IMR-90 (cell line): ENCODE measurements at regions of chr6 and their contacts with region 1.

Region 1: DNA sequence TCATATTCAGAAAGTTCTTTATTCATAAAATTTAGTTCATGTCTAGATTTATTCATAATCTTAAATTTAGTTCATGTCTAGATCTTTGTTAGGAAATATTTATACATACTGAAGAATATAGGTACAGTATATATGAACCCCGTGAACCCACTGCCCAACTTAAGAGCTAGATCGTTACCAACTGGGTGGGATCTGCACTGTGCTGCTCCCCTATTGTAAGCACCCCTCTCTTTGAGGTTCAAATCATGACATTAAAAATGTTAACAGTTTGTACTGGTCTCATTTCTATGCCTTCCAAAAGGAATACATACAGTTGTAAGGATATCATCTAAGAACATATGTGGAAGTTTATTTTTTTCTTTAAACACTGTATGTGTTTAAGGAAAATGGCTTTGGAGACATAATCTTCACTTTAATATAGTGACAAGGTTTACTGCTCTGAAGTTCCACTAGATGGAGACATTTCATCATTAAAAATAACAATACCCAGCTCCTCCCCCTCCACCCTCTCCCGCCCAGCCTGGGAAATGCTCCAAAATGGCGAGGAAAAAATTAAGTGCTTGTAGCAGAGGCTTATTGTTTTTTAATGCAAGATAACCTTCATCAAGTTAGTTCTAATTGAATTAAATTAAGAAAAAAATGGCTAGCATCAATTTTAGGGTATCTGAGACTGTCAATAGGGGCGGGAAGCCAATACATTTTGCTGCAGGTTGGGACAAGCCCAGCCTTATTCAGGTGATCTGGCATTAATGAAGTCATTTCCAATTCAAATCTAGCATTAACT is 104.1 kb upstream of the TRAF3IP2 start:
- DNase-seq: peak; percentile 76
- ATAC-seq: peak; percentile 90
- H3K4me3 ChIP-seq: no peak overlapping the region
- H3K27ac ChIP-seq: 0 out of 2 replicates have a peak overlapping the region, but pooled peaks have one; percentile 48
- H3K4me1 ChIP-seq: peaks cover 6% of the 10 kb centered on the region
- H3K27me3 ChIP-seq: no peaks in the 10 kb centered on the region
- CTCF ChIP-seq: peak; percentile 82
- POLR2A ChIP-seq: no peak
- RAD21 ChIP-seq: peak; percentile 87

Region 2: GRCh38 chr6:111113336-111114086 is 596.3 kb before region 1 on chr6:
- CTCF ChIA-PET with region 1: no interaction called
- POLR2A ChIA-PET with region 1: no interaction called
- dilution Hi-C with region 1: no loop called
- in situ Hi-C with region 1: no loop called
- intact Hi-C with region 1: no loop called
- DNase-seq: peak; percentile 48
- ATAC-seq: no peak; the same call in 1 of the 2 replicates
- H3K4me3 ChIP-seq: no peak overlapping the region
- H3K27ac ChIP-seq: no peak overlapping the region
- H3K4me1 ChIP-seq: no peaks in the 10 kb centered on the region
- H3K27me3 ChIP-seq: no peaks in the 10 kb centered on the region
- CTCF ChIP-seq: no peak
- POLR2A ChIP-seq: no peak
- RAD21 ChIP-seq: no peak

Region 3: GRCh38 chr6:111823831-111824607 is 114.2 kb after region 1 on chr6:
- CTCF ChIA-PET with region 1: no interaction called
- POLR2A ChIA-PET with region 1: no interaction called
- dilution Hi-C with region 1: no loop called
- in situ Hi-C with region 1: no loop called
- intact Hi-C with region 1: loop called (anchors 5 kb)
- DNase-seq: peak; percentile 86
- ATAC-seq: peak; percentile 87
- H3K4me3 ChIP-seq: peak overlapping the region; percentile 11; the same call in 1 of the 2 replicates
- H3K27ac ChIP-seq: no peak overlapping the region
- H3K4me1 ChIP-seq: peaks cover 15% of the 10 kb centered on the region
- H3K27me3 ChIP-seq: no peaks in the 10 kb centered on the region
- CTCF ChIP-seq: no peak
- POLR2A ChIP-seq: 0 out of 2 replicates have a peak, but pooled peaks have one; percentile 42
- RAD21 ChIP-seq: no peak

Region 4: GRCh38 chr6:111997078-111997852 is 287.5 kb after region 1 on chr6:
- CTCF ChIA-PET with region 1: interaction called, 3 read pairs
- POLR2A ChIA-PET with region 1: no interaction called
- dilution Hi-C with region 1: no loop called
- in situ Hi-C with region 1: loop called (anchors 5 kb)
- intact Hi-C with region 1: loop called (anchors 1 kb)
- DNase-seq: peak; percentile 80
- ATAC-seq: peak; percentile 96
- H3K4me3 ChIP-seq: no peak overlapping the region
- H3K27ac ChIP-seq: no peak overlapping the region
- H3K4me1 ChIP-seq: no peaks in the 10 kb centered on the region
- H3K27me3 ChIP-seq: peaks cover 2% of the 10 kb centered on the region; the same call in 1 of the 2 replicates
- CTCF ChIP-seq: peak; percentile 95
- POLR2A ChIP-seq: 0 out of 2 replicates have a peak, but pooled peaks have one; percentile 53
- RAD21 ChIP-seq: peak; percentile 98

Region 5: GRCh38 chr6:112029045-112029822 is 319.4 kb after region 1 on chr6:
- CTCF ChIA-PET with region 1: no interaction called
- POLR2A ChIA-PET with region 1: no interaction called
- dilution Hi-C with region 1: no loop called
- in situ Hi-C with region 1: no loop called
- intact Hi-C with region 1: loop called (anchors 1 kb)
- DNase-seq: peak; percentile 74
- ATAC-seq: peak; percentile 66; the same call in 1 of the 2 replicates
- H3K4me3 ChIP-seq: no peak overlapping the region
- H3K27ac ChIP-seq: no peak overlapping the region
- H3K4me1 ChIP-seq: no peaks in the 10 kb centered on the region
- H3K27me3 ChIP-seq: peaks cover 15% of the 10 kb centered on the region
- CTCF ChIP-seq: peak; percentile 68
- POLR2A ChIP-seq: no peak
- RAD21 ChIP-seq: peak; percentile 66